ENCODE measurements at regions of chr19 and their contacts with region 1.

Region 1: DNA sequence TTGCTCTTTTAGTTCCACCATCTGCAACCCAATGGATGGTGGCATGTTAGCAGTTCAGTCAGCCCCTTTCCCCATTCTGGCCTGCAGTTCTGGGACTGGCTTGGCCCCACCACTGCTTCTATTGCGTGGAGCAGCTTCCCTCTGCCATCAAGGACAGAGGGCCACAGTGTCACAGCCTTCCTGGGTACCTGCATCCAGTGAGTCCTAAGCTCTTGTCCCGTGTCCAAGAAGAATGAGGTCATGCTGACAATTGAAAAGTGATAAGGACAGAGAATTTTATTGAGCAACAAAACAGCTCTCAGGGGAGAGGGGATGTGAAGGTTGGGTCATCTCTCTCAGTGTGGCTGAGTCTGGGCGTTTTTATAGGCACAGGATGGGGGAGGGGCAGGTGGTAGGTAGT is 33.5 kb upstream of the SIN3B start:
- DNase-seq: no peak
- H3K4me3 ChIP-seq: no peak overlapping the region
- H3K27ac ChIP-seq: no peak overlapping the region
- H3K4me1 ChIP-seq: no peaks in the 10 kb centered on the region
- H3K27me3 ChIP-seq: no peaks in the 10 kb centered on the region
- CTCF ChIP-seq: no peak
- POLR2A ChIP-seq: no peak

Region 2: GRCh38 chr19:15508035-15508710 is 1287.5 kb before region 1 on chr19 and contains the start of gene CYP4F22:
- intact Hi-C with region 1: no loop called
- DNase-seq: no peak
- H3K4me3 ChIP-seq: peak within 1 kb of the TSS; percentile 4 to 63 (median 42)
- H3K27ac ChIP-seq: no peak within 1 kb of the TSS
- H3K4me1 ChIP-seq: peaks cover 0 to 3% of the 10 kb centered on the region in 2 donors
- H3K27me3 ChIP-seq: peaks cover 0 to 35% of the 10 kb centered on the region in 2 donors
- CTCF ChIP-seq: no peak
- POLR2A ChIP-seq: no peak
- total RNA-seq, gene CYP4F22: 8.8 to 26.9 (median 9.4) TPM

Region 3: DNA sequence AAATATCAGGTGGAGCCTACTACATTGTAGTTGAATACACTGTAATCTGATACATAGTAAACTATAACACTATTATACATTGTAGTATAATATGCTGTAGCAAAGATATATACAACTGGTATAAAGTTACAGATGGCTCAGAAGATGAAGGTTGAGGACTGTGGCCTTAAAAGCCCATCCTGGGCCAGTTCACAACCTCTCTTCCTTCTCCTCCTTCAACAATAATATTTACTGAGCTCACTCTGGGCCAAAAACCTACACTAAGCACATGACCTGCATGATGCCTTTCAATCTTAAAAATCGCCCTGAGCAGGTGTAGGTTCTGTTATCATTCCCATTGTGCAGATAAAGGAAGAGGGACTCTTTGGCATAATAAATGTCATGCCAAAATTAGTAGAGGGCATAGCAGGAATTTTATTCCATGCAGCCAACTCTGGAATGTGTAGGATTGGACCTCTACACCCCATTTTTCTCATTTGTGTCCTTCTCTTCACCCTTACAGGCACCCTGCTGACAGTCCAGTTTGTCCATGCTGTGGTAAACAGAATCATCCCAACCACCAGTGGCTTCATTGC is 18.9 kb after region 1 on chr19:
- intact Hi-C with region 1: no loop called
- DNase-seq: no peak
- H3K4me3 ChIP-seq: no peak overlapping the region
- H3K27ac ChIP-seq: no peak overlapping the region
- H3K4me1 ChIP-seq: no peaks in the 10 kb centered on the region
- H3K27me3 ChIP-seq: no peaks in the 10 kb centered on the region
- CTCF ChIP-seq: no peak
- POLR2A ChIP-seq: no peak

Region 4: GRCh38 chr19:17659996-17660395 is 864.3 kb after region 1 on chr19:
- intact Hi-C with region 1: loop called (anchors 10 kb)
- DNase-seq: no peak
- H3K4me3 ChIP-seq: no peak overlapping the region
- H3K27ac ChIP-seq: no peak overlapping the region
- H3K4me1 ChIP-seq: no peaks in the 10 kb centered on the region
- H3K27me3 ChIP-seq: no peaks in the 10 kb centered on the region
- CTCF ChIP-seq: no peak
- POLR2A ChIP-seq: no peak

Measured in breast epithelium (tissue), 4 donors.